ENCODE measurements at regions of chr12 and their contacts with region 1.

Region 1: DNA sequence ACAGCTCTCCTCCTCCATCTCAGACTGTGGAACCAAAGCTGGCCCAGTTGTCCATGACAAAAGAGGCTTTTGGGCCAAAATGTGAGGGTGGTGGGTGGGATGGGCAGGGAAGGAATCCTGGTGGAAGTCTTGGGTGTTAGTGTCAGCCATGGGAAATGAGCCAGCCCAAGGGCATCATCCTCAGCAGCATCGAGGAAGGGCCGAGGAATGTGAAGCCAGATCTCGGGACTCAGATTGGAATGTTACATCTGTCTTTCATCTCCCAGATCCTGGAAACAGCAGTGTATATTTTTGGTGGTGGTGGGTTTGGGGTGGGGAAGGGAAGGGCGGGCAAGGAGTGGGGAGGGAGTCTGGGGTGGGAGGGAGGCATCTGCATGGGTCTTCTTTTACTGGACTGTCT is 11.8 kb upstream of the TAMALIN start:
- DNase-seq: no peak
- H3K4me3 Mint-ChIP-seq: no peak overlapping the region
- H3K27ac Mint-ChIP-seq: no peak overlapping the region
- H3K4me1 Mint-ChIP-seq: peaks cover 7% of the 10 kb centered on the region
- H3K27me3 Mint-ChIP-seq: no peaks in the 10 kb centered on the region

Region 2: DNA sequence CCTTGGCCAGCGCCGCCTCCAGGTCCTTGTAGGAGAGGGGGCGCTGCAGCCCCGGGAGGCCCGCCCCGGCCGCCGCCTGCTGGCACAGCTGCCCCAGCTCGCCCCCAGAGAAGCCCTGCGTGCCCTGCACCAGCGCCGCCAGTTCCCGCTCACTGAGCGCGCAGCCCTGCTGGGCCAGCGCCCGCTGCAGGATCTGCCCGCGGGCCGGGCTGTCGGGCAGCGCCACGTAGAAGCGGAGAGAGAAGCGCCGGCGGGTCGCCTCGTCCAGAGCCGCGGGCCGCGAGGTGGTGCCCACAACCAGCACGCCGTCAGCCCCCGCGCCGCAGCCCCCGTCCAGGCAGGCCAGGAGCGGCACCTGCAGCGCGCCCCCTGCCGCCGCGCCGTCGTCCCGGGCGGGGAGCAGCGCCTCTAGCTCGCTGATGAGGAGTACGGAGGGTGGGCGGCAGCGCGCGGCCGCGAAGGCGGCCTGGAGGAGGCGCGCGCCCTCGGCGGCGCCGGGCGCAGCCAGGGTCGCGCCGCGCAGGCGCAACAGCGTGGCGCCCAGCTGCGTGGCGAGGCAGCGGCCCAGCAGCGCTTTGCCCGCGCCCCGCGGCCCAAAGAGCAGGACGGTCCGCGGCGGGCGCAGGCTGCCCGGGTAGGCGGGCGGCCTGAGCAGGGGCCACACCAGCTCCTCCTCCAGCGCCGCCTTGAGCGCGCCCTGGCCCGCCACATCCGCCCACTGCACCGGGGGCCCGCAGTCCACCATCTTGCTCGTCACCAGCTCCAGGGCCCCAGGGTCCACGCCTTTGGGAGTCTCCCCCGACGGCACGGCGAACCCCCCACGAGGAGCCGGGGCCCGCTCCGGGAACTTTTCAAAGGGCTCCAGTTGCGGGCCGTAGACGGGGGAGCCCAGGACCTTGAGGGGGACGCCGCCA is 174.2 kb before region 1 on chr12:
- CTCF ChIA-PET with region 1: no interaction called
- intact Hi-C with region 1: no loop called
- DNase-seq: peak; percentile 74
- H3K4me3 Mint-ChIP-seq: peak overlapping the region; percentile 60
- H3K27ac Mint-ChIP-seq: no peak overlapping the region
- H3K4me1 Mint-ChIP-seq: peaks cover 6% of the 10 kb centered on the region
- H3K27me3 Mint-ChIP-seq: no peaks in the 10 kb centered on the region

Region 3: DNA sequence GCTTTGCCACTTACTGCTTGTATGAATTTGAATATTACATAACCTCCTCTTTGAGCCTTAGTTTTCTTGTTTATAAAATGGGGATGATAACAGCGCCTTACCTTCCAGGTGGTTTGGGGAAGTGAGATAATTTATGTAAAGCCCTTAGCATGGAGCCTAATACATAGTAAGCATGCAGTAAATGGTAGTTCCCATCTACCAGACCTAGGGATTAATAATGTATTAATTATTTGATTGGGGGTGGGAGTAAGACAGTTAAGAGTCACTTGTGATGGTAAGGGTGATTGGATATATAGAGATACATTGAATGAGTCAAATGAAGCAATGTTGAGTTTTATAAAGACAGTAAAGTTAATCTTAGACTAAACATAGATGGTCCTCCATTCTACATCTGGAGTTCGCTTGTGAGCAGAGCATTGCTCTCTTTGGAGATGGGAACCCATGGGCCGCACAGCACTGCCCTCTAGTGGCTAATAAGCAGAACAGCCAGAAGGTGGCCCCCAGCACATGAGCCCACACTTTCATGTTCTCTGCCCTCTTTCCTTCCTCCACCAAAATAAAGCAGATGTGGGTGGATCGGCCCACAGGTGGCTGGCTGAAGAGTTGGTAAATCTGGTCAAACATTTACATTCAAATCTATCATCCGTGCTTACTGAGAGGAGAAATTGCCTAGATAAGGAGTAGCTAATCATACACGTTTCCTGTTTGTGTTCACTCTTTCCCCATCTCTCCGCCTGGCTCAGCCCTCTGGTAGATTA is 14.7 kb before region 1 on chr12:
- CTCF ChIA-PET with region 1: interaction called, 18 read pairs
- intact Hi-C with region 1: no loop called
- DNase-seq: peak; percentile 78
- H3K4me3 Mint-ChIP-seq: no peak overlapping the region
- H3K27ac Mint-ChIP-seq: no peak overlapping the region
- H3K4me1 Mint-ChIP-seq: peaks cover 25% of the 10 kb centered on the region
- H3K27me3 Mint-ChIP-seq: no peaks in the 10 kb centered on the region

Region 4: DNA sequence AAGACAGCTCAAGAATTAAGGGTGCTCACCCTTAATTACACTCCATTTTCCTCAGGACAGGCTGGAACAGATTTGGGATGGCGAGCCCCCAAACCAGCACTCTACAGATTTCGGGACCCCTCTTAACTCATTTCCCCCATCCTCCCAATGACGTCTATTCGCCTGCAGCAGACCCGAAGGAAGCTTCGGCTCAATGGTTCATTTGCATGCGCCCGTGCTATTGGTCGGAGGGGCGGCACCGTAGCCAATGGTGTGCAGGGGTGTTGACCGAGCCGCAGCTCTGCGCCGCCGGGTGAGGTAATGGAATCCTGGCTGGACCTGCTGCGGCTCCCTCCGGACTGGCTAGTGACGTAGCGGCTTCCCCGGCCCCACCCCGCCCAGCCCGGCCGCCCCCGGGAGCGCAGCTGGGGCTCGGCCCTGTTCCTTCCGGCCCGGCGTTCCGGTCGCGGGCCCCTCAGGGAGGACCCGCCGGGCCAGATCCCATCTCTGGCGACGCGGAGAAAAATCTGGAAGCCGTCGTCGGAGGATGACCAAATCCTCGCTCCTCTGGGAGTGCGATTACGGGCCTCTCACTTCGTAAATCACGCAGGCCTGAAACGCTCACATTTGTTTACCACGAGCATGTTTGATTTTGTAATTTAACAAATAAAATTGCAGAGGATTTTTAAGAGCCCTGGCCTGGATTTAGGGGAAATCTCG is 38.0 kb after region 1 on chr12:
- CTCF ChIA-PET with region 1: interaction called, 11 read pairs
- intact Hi-C with region 1: no loop called
- DNase-seq: peak; percentile 94
- H3K4me3 Mint-ChIP-seq: peak overlapping the region; percentile 56
- H3K27ac Mint-ChIP-seq: peak overlapping the region; percentile 47
- H3K4me1 Mint-ChIP-seq: peaks cover 36% of the 10 kb centered on the region
- H3K27me3 Mint-ChIP-seq: no peaks in the 10 kb centered on the region

Region 5: GRCh38 chr12:52050761-52051541 is 56.0 kb after region 1 on chr12 and contains the start of gene NR4A1:
- CTCF ChIA-PET with region 1: no interaction called
- intact Hi-C with region 1: loop called (anchors 2 kb)
- DNase-seq: peak; percentile 99
- H3K4me3 Mint-ChIP-seq: peak within 1 kb of the TSS; percentile 98
- H3K27ac Mint-ChIP-seq: peak within 1 kb of the TSS; percentile 84
- H3K4me1 Mint-ChIP-seq: peaks cover 44% of the 10 kb centered on the region
- H3K27me3 Mint-ChIP-seq: no peaks in the 10 kb centered on the region
- total RNA-seq, gene NR4A1: 64.2 to 64.8 TPM

Region 6: GRCh38 chr12:52082988-52083637 is 88.2 kb after region 1 on chr12:
- CTCF ChIA-PET with region 1: interaction called, 8 read pairs
- intact Hi-C with region 1: loop called (anchors 1 kb)
- DNase-seq: peak; percentile 69
- H3K4me3 Mint-ChIP-seq: no peak overlapping the region
- H3K27ac Mint-ChIP-seq: no peak overlapping the region
- H3K4me1 Mint-ChIP-seq: peaks cover 10% of the 10 kb centered on the region
- H3K27me3 Mint-ChIP-seq: peaks cover 4% of the 10 kb centered on the region

Region 7: GRCh38 chr12:52121824-52122539 is 127.0 kb after region 1 on chr12:
- CTCF ChIA-PET with region 1: interaction called, 7 read pairs
- intact Hi-C with region 1: loop called (anchors 5 kb)
- DNase-seq: peak; percentile 78
- H3K4me3 Mint-ChIP-seq: no peak overlapping the region
- H3K27ac Mint-ChIP-seq: no peak overlapping the region
- H3K4me1 Mint-ChIP-seq: peaks cover 11% of the 10 kb centered on the region
- H3K27me3 Mint-ChIP-seq: peaks cover 17% of the 10 kb centered on the region

Measured in activated naive CD4-positive, alpha-beta T cell treated with anti-CD3 and anti-CD28 coated beads for 36 hours (primary cell).